ENCODE measurements at regions of chr9 and their contacts with region 1.

Region 1: DNA sequence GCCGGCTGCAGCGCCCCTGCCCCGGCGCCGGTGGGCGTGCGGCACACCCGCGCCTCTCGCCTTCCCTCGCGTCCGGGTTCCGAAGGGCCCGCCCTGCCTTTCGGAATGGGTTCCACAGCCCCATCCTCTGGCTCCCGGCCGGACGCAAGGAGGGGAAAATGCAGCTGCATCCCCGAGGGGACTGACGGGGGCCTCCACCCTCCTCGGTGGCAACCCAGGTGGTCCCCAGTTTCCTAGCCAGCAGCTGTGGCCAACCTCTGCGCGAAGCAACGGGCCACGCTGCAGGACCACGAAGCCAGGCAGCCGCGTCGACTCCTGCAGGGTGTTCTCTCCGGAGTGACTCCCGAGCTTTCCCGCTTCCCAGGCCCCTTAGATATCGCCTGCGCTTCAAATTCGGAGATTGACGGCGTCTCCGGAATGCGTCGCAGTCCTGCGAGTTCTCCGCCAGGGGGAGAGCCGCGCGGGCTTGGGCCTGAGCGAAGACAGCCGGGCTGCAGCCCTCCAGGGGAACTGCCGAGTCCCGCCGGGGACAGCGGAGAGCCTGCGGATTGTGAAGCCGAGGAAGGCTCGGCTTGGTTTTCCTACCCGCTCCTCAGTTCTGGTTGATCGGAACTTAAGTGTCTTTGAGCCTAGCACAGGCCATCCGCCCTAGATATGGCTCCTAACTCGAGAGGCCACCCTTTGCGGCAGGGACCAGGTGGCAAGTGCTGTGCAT is 582 bp upstream of the APBA1 start:
- DNase-seq: peak; percentile 95
- H3K4me3 ChIP-seq: peak overlapping the region; percentile 54
- H3K27ac ChIP-seq: no peak overlapping the region
- H3K4me1 ChIP-seq: peaks cover 6% of the 10 kb centered on the region
- H3K27me3 ChIP-seq: peaks cover 39% of the 10 kb centered on the region
- CTCF ChIP-seq: peak; percentile 92

Region 2: DNA sequence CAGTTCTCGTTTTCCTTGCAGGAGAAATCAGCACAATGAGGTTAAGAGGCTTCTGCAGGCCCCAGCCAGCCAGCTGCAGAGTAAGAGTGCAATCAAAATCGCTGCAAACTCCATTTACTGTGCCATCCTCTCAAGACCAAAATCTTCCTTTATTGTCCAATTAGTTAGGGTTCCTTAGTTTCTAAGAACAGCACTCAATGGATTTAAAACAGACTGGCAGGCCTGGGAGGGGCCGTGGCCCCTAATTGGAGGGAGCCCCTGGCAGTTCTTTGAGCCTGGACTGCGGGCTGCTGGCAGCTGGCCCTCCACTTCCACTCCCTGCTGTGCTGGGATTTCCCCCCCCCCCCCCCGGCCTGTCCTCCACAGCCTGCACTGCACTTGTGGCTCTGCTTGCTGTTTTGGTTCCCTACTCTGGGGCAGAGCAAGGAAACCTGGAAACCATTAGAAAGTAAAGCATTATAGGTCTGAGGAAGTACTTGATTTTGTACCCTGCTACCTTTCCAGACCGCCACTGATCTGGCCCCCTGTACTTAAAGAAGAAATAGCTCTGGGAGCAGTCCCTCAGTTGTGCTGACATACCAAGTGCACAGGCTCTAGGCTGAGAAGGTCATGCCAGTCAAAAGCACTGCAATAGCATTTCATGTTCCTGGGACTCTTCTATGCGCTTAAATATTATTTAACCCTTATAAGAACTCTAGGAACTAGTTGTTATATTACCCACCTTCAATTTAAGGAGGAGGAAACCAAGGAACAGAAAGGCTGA is 129.6 kb before region 1 on chr9:
- CTCF ChIA-PET with region 1: no interaction called
- POLR2A ChIA-PET with region 1: no interaction called
- intact Hi-C with region 1: loop called (anchors 5 kb)
- DNase-seq: peak; percentile 64
- H3K4me3 ChIP-seq: no peak overlapping the region
- H3K27ac ChIP-seq: no peak overlapping the region
- H3K4me1 ChIP-seq: peaks cover 6% of the 10 kb centered on the region
- H3K27me3 ChIP-seq: peaks cover 37% of the 10 kb centered on the region
- CTCF ChIP-seq: no peak

Region 3: DNA sequence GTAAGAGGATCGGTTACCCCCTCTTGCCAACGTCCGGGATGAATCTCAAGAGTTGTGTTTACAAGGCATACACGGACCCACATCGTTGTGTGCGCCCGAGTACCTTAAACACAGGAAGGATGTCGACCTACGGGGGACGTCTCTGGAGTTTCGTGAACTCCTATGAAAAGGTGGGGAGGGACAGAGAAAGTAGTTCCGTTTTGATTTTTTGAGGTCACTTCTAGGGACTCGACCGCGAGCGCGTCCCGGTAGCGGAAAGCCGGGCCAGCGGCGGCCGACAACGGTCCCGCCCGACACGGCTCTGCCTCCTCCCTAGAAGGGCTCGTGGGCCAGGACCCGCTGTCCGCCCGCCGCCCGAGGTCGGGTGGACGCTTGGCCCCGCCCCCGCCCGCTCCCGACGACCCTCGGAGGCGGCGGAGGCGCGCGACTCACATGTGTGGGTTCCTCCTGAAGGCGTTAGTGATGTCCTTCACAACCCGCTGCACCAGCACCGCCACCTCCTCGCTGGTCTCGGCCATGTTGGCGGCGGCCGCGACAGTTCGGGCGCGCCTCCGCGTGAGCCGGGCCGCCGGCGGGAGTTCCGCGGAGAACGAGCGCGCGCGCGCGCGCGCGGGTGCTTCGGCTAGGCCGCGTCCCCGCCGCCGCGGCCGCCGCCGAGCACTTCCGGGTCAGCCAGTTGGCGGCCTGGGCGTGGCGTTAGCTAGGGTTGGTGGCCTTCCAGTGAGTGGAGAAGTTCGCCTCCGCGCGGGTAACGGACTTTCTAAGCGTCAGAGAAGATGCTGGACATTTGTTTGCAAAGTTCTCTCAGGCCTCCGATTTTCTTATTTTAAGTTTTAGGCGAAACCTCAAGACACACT is 86.9 kb after region 1 on chr9 and contains the start of gene PTAR1:
- CTCF ChIA-PET with region 1: no interaction called
- POLR2A ChIA-PET with region 1: no interaction called
- intact Hi-C with region 1: loop called (anchors 5 kb)
- DNase-seq: peak; percentile 94
- H3K4me3 ChIP-seq: peak within 1 kb of the TSS; percentile 63
- H3K27ac ChIP-seq: peak within 1 kb of the TSS; percentile 94
- H3K4me1 ChIP-seq: peaks cover 12% of the 10 kb centered on the region
- H3K27me3 ChIP-seq: no peaks in the 10 kb centered on the region
- CTCF ChIP-seq: no peak
- total RNA-seq, gene PTAR1: 60.9 and 61.5 TPM in 2 replicates

Region 4: DNA sequence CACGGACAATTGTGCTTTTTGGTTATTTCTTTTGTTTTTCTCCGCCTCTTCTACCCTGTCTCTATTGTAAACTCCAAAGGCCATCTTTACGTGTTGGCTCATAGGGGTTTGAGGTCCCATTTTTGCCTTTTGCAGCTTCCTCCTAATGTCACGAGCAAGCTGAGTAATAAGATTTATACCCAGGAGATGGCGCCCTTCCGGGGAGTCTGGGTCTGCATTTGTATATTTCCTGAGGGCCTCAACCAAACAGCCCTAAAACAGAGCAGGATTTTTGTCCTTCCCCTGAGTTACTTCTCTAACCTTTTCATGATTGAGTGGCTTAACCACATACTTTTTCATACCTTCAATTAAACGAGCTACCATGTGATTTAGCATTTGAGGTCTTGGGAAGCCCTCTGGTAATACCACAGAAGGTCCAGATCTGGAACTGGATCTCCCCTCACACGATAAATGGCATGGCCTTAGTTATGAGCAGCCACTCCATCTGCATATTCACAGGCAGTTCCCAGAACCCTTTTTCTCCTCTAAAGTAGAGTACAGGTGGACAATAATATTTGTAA is 136.6 kb after region 1 on chr9:
- CTCF ChIA-PET with region 1: no interaction called
- POLR2A ChIA-PET with region 1: no interaction called
- intact Hi-C with region 1: loop called (anchors 5 kb)
- DNase-seq: peak; percentile 74
- H3K4me3 ChIP-seq: no peak overlapping the region
- H3K27ac ChIP-seq: peak overlapping the region; percentile 4
- H3K4me1 ChIP-seq: peaks cover 26% of the 10 kb centered on the region
- H3K27me3 ChIP-seq: no peaks in the 10 kb centered on the region
- CTCF ChIP-seq: peak; percentile 64

Region 5: GRCh38 chr9:69815313-69815712 is 142.6 kb after region 1 on chr9:
- CTCF ChIA-PET with region 1: no interaction called
- POLR2A ChIA-PET with region 1: interaction called, 12 read pairs
- intact Hi-C with region 1: no loop called
- DNase-seq: peak; percentile 65
- H3K4me3 ChIP-seq: no peak overlapping the region
- H3K27ac ChIP-seq: peak overlapping the region; percentile 77
- H3K4me1 ChIP-seq: peaks cover 63% of the 10 kb centered on the region
- H3K27me3 ChIP-seq: no peaks in the 10 kb centered on the region
- CTCF ChIP-seq: no peak

Region 6: GRCh38 chr9:69877854-69878514 is 205.2 kb after region 1 on chr9:
- CTCF ChIA-PET with region 1: no interaction called
- POLR2A ChIA-PET with region 1: no interaction called
- intact Hi-C with region 1: loop called (anchors 2 kb)
- DNase-seq: peak; percentile 66
- H3K4me3 ChIP-seq: no peak overlapping the region
- H3K27ac ChIP-seq: no peak overlapping the region
- H3K4me1 ChIP-seq: peaks cover 3% of the 10 kb centered on the region
- H3K27me3 ChIP-seq: no peaks in the 10 kb centered on the region
- CTCF ChIP-seq: peak; percentile 75

Region 7: GRCh38 chr9:69919461-69920061 is 246.8 kb after region 1 on chr9:
- CTCF ChIA-PET with region 1: interaction called, 4 read pairs
- POLR2A ChIA-PET with region 1: no interaction called
- intact Hi-C with region 1: loop called (anchors 5 kb)
- DNase-seq: peak; percentile 78
- H3K4me3 ChIP-seq: no peak overlapping the region
- H3K27ac ChIP-seq: no peak overlapping the region
- H3K4me1 ChIP-seq: no peaks in the 10 kb centered on the region
- H3K27me3 ChIP-seq: peaks cover 26% of the 10 kb centered on the region
- CTCF ChIP-seq: peak; percentile 77